Natural killer cell (primary cell): ENCODE measurements at regions of chr14 and their contacts with region 1.

Region 1: GRCh38 chr14:89040460-89041259 is 216.2 kb downstream of the TTC8 start:
- DNase-seq: peak; percentile 78 to 83
- ATAC-seq: peak; percentile 79 to 94 (median 85)
- H3K4me3 ChIP-seq: peak overlapping the region; percentile 16
- H3K4me3 Mint-ChIP-seq: peak overlapping the region; percentile 75
- H3K27ac ChIP-seq: no peak overlapping the region
- H3K27ac Mint-ChIP-seq: no peak overlapping the region
- H3K4me1 ChIP-seq: peaks cover 10% of the 10 kb centered on the region
- H3K4me1 Mint-ChIP-seq: peaks cover 7 to 13% of the 10 kb centered on the region in 2 donors
- H3K27me3 ChIP-seq: peaks cover 10% of the 10 kb centered on the region
- H3K27me3 Mint-ChIP-seq: peaks cover 47 to 77% of the 10 kb centered on the region in 2 donors
- CTCF ChIP-seq: peak; percentile 96

Region 2: DNA sequence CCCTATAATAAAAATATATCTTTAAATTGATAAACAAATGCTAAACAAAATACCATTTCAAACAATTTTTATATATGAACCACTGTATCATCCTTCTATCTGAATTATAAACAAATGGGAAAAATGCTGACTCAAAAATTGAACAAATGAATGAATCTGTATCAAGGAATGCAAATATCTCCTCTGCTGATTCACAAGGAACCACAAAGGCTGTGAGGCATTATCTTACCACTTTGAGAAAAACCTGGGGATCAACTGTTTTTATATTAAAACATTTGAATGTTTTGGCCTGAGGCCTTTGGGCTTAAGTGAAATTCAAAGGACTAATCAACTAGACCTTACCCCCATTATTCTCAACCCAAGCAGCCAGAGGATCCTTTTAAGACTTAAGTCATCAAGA is 334.2 kb before region 1 on chr14:
- intact Hi-C with region 1: no loop called
- DNase-seq: no peak
- ATAC-seq: no peak
- H3K4me3 ChIP-seq: no peak overlapping the region
- H3K4me3 Mint-ChIP-seq: no peak overlapping the region
- H3K27ac ChIP-seq: no peak overlapping the region
- H3K27ac Mint-ChIP-seq: no peak overlapping the region
- H3K4me1 ChIP-seq: no peaks in the 10 kb centered on the region
- H3K4me1 Mint-ChIP-seq: no peaks in the 10 kb centered on the region
- H3K27me3 ChIP-seq: no peaks in the 10 kb centered on the region
- H3K27me3 Mint-ChIP-seq: peaks cover 0 to 2% of the 10 kb centered on the region in 2 donors
- CTCF ChIP-seq: no peak

Region 3: DNA sequence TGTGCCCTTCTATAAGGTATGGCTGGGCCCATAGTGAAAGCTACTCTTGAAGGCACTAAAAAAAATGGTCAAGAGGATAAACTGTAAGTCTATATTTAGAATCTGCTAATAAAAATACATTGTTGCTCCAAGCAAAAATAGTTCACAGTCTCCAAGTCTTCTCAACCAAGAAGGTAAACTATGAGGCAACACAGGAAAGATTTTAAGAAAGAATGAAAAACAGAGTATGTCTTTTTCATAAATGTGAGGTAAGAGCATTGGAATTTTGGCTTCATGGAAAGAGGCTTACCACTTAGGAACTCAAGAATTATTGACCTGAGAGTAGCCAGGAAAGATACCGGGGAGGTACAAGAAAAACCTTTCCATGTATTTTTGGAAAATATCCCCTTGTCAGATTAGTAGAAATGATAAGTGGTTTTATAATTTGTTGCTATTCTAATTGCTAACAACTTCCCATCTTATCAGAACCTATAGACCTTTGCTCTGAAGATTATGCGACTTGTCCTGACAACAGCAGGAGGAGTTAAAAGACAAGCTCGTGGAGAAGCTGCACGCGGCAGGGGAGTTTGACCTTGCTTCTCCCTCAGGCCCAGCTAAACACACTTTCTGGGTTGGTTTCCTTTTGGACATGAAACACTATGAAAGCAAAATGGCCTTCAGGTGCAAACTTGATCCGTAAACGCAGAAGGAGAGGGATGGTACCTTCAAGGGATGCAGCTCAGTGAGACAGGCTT is 138.3 kb after region 1 on chr14:
- intact Hi-C with region 1: loop called (anchors 10 kb)
- DNase-seq: no peak
- ATAC-seq: no peak
- H3K4me3 ChIP-seq: no peak overlapping the region
- H3K4me3 Mint-ChIP-seq: no peak overlapping the region
- H3K27ac ChIP-seq: no peak overlapping the region
- H3K27ac Mint-ChIP-seq: peak overlapping the region; percentile 34 to 69
- H3K4me1 ChIP-seq: peaks cover 6% of the 10 kb centered on the region
- H3K4me1 Mint-ChIP-seq: peaks cover 41 to 47% of the 10 kb centered on the region in 2 donors
- H3K27me3 ChIP-seq: no peaks in the 10 kb centered on the region
- H3K27me3 Mint-ChIP-seq: no peaks in the 10 kb centered on the region
- CTCF ChIP-seq: no peak

Region 4: DNA sequence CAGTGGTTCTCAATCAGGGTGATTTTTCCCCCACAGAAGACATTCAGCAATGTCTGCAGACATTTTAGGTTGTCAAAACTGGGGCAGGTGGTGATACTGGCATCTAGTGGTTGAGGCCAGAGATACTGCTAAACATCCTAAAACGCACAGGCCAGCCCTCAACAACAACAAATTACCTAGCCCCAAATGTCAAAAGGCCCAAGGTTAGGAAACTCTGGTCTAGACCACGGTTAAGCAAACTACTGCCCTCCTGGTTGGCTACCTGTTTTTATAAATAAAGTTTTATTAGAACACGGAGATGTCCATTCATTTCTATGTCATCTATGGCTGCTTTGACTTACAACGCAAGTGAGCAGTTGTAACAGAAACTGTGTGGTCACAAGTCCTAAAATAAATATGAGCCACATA is 727.2 kb after region 1 on chr14:
- intact Hi-C with region 1: loop called (anchors 1 kb)
- DNase-seq: peak; percentile 42 to 87
- ATAC-seq: peak; percentile 87 to 99 (median 99)
- H3K4me3 ChIP-seq: no peak overlapping the region
- H3K4me3 Mint-ChIP-seq: peak overlapping the region; percentile 26
- H3K27ac ChIP-seq: no peak overlapping the region
- H3K27ac Mint-ChIP-seq: peak overlapping the region; percentile 42 to 77
- H3K4me1 ChIP-seq: peaks cover 18% of the 10 kb centered on the region
- H3K4me1 Mint-ChIP-seq: peaks cover 22 to 33% of the 10 kb centered on the region in 2 donors
- H3K27me3 ChIP-seq: no peaks in the 10 kb centered on the region
- H3K27me3 Mint-ChIP-seq: no peaks in the 10 kb centered on the region
- CTCF ChIP-seq: peak; percentile 81

Region 5: GRCh38 chr14:89899917-89900663 is 859.4 kb after region 1 on chr14:
- intact Hi-C with region 1: loop called (anchors 1 kb)
- DNase-seq: peak in 1 of 2 donors; percentile 60
- ATAC-seq: peak in 2 of 3 donors; percentile 34 to 44
- H3K4me3 ChIP-seq: no peak overlapping the region
- H3K4me3 Mint-ChIP-seq: no peak overlapping the region
- H3K27ac ChIP-seq: no peak overlapping the region
- H3K27ac Mint-ChIP-seq: no peak overlapping the region
- H3K4me1 ChIP-seq: no peaks in the 10 kb centered on the region
- H3K4me1 Mint-ChIP-seq: peaks cover 0 to 5% of the 10 kb centered on the region in 2 donors
- H3K27me3 ChIP-seq: no peaks in the 10 kb centered on the region
- H3K27me3 Mint-ChIP-seq: no peaks in the 10 kb centered on the region
- CTCF ChIP-seq: peak; percentile 64

Region 6: DNA sequence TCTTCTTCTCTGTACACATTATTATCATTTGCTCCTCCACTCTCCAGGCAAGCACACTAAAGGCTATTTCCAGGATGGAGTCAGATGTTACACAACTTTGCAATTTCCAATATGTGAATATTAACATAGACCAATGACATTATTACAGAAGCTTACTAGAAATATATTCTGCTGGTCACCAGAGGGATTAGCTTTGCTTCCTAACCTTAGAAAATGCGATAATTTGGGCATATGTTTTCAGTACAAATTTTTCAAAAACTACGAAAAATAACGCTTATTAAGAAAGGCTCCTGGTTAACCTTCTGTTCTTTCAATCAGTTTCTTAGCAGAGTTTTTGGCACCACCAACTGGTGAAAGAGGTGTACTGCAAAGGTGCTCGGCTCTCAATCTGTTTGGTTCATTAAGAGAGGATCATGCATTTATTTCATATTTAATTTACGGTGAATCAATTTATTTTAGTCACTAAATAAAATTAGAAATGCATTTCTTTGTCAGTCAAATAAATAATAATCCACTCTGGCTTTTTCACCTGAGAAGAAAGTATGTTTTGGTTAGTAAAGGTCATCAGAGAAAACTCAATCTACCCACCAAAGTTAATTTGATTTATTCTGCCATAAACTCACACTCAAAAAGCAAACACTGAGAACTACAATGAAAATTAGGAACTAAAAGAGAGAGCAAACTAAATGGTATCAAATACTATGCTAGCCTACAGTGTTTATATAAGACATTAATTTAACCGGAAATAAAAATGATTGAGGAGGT is 874.6 kb after region 1 on chr14:
- intact Hi-C with region 1: loop called (anchors 1 kb)
- DNase-seq: peak; percentile 40 to 79
- ATAC-seq: peak; percentile 75 to 78 (median 77)
- H3K4me3 ChIP-seq: no peak overlapping the region
- H3K4me3 Mint-ChIP-seq: no peak overlapping the region
- H3K27ac ChIP-seq: no peak overlapping the region
- H3K27ac Mint-ChIP-seq: no peak overlapping the region
- H3K4me1 ChIP-seq: no peaks in the 10 kb centered on the region
- H3K4me1 Mint-ChIP-seq: no peaks in the 10 kb centered on the region
- H3K27me3 ChIP-seq: no peaks in the 10 kb centered on the region
- H3K27me3 Mint-ChIP-seq: peaks cover 9 to 16% of the 10 kb centered on the region in 2 donors
- CTCF ChIP-seq: peak; percentile 98